Psoas muscle (tissue), 8 donors: ENCODE measurements at regions of chr18 and their contacts with region 1.

Region 1: GRCh38 chr18:14015416-14015815 is 100.1 kb upstream of the MC2R start:
- DNase-seq: no peak
- ATAC-seq: no peak
- H3K4me3 ChIP-seq: no peak overlapping the region
- H3K27ac ChIP-seq: no peak overlapping the region
- H3K4me1 ChIP-seq: no peaks in the 10 kb centered on the region
- H3K27me3 ChIP-seq: no peaks in the 10 kb centered on the region
- CTCF ChIP-seq: no peak

Region 2: DNA sequence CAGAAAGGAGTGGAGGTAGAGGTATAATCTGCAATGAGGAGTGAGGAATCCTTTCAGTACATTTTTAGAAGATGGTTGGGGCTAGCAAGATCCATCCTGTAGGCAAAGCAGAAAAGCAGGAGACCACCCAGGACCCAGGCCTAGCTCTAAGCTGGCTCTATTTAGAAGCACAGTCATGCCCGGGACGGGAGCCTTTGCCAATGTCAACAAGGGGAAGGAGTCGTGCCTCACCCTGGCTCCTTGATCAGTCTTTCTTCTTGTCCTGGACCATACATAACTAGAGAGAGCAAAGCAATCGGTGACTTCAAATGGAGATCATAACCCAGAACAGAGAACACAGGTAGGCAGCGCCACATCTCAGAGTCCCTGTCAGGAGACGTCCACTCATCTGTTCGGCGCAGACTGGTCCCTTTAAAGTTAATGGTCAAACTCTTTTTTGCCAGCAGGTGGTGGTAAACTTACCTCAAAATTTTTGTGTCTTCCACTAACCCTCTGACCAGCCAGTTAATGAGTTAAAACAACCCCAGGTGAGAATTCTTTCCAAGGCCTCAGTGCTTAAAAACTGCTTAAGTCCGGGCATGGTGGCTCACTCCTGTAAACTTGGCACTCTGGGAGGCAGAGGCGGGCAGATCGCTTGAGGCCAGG is 183.4 kb before region 1 on chr18:
- intact Hi-C with region 1: no loop called
- DNase-seq: no peak
- ATAC-seq: no peak
- H3K4me3 ChIP-seq: no peak overlapping the region
- H3K27ac ChIP-seq: no peak overlapping the region
- H3K4me1 ChIP-seq: no peaks in the 10 kb centered on the region
- H3K27me3 ChIP-seq: peaks cover 0 to 12% (median 0%) of the 10 kb centered on the region in 3 donors
- CTCF ChIP-seq: no peak

Region 3: GRCh38 chr18:13945811-13946210 is 69.6 kb before region 1 on chr18:
- intact Hi-C with region 1: loop called in 1 of 2 experiments (anchors 10 kb)
- DNase-seq: no peak
- ATAC-seq: no peak
- H3K4me3 ChIP-seq: no peak overlapping the region
- H3K27ac ChIP-seq: no peak overlapping the region
- H3K4me1 ChIP-seq: no peaks in the 10 kb centered on the region
- H3K27me3 ChIP-seq: no peaks in the 10 kb centered on the region
- CTCF ChIP-seq: no peak

Region 4: GRCh38 chr18:14026199-14026598 is 10.8 kb after region 1 on chr18:
- intact Hi-C with region 1: loop called in 1 of 2 experiments (anchors 1 kb)
- DNase-seq: no peak
- ATAC-seq: no peak
- H3K4me3 ChIP-seq: no peak overlapping the region
- H3K27ac ChIP-seq: no peak overlapping the region
- H3K4me1 ChIP-seq: no peaks in the 10 kb centered on the region
- H3K27me3 ChIP-seq: no peaks in the 10 kb centered on the region
- CTCF ChIP-seq: no peak